Ovary (tissue), 10 donors: ENCODE measurements at regions of chr1 and their contacts with region 1.

Region 1: GRCh38 chr1:41874903-41875411 is 43.8 kb downstream of the HIVEP3 start:
- DNase-seq: peak in 1 of 5 donors; percentile 28
- H3K4me3 ChIP-seq: no peak overlapping the region
- H3K27ac ChIP-seq: no peak overlapping the region
- H3K4me1 ChIP-seq: peaks cover 8% of the 10 kb centered on the region
- H3K27me3 ChIP-seq: no peaks in the 10 kb centered on the region
- CTCF ChIP-seq: no peak
- EP300 ChIP-seq: no peak
- POLR2A ChIP-seq: no peak

Region 2: DNA sequence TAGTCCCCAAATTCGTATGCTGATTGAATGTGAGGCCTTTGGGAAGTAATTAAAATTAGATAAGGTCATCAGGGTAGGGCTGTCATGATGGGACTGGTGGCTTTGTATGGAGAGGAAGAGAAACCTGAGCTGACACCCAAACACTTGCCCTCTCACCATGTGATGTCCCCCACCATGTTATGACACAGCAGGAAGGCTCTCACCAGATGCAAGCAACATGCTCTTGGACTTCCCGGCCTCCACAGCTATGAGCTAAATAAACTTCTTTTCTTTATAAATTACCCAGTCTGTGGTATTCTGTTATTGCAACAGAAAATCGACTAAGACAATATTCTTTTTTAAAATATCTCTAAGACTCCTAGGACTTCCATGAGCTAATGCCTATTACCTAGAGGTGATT is 234.6 kb after region 1 on chr1:
- intact Hi-C with region 1: loop called in 1 of 4 experiments (anchors 1 kb)
- DNase-seq: no peak
- H3K4me3 ChIP-seq: no peak overlapping the region
- H3K27ac ChIP-seq: no peak overlapping the region
- H3K4me1 ChIP-seq: no peaks in the 10 kb centered on the region
- H3K27me3 ChIP-seq: no peaks in the 10 kb centered on the region
- CTCF ChIP-seq: no peak
- EP300 ChIP-seq: no peak
- POLR2A ChIP-seq: no peak